Activated CD4-positive, alpha-beta T cell treated with anti-CD3 and anti-CD28 coated beads for 36 hours (primary cell): ENCODE measurements at regions of chr15 and their contacts with region 1.

Region 1: DNA sequence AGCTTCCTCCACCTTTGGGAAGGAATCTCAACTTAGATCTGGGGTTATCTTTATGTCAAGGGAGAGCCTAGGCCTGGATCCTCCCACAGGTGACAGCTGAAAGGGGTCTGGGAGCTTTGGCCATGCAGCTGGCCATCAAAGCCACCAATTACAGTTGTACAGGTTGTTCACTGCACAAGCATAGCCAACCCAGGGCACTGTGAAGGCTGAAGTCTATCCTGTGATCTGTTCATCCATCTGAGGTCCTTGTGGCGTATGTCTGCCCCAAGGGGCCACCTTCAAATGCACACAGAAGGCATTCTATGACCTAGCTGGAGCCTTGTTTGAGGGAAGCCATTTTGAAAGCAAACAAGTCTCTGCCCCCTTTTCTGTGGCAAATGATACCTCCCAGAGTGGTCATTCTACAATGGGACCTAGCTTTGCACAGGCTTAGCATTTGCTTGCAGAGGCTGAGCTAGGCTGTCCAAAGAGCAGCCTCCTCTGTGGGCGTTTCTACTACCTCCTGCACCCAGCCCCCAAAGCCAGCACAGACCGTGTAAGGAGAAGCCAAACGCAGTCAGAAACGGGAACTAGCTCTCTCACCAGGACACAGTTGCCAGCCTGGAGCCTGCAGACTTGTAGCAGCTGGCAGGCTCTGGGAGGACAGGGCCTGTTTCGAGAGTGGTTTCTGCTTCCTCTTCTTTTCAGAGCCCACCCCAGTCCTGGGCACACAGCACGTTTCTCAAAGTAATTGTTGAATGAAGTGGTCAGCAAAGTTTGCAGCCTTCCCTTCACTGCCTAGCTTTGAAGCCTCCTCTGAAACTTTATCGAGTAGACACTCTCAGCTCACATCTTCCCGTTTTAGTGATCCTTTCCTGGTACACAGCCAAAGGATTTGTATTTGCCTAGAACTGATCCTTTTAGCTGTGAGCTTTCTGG is 157.3 kb upstream of the SMAD3 start:
- DNase-seq: no peak
- ATAC-seq: no peak
- H3K4me3 Mint-ChIP-seq: no peak overlapping the region
- H3K27ac Mint-ChIP-seq: no peak overlapping the region
- H3K4me1 Mint-ChIP-seq: peaks cover 18% of the 10 kb centered on the region
- H3K27me3 Mint-ChIP-seq: no peaks in the 10 kb centered on the region

Region 2: DNA sequence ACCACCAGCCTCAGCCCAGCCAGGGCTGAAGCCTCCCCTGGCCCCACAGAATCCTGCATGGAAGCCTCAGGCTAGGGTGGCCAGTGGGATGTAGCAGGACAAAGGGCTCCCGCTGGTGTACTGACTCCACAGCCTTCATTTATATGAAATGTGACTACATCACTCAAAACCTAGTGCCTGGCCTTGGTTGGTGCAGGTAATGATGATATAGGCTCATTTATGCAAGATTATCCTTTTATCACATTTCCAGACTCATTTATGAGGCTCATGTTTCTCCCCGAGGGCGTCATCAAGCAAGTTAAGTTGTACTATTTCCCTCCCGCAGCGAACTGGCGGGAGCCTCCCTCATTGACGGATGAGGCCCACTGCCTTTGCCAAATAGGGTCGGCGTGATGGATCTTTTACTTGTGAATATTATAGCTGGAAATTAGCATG is 21.8 kb before region 1 on chr15:
- CTCF ChIA-PET with region 1: interaction called, 12 read pairs
- POLR2A ChIA-PET with region 1: no interaction called
- intact Hi-C with region 1: no loop called
- DNase-seq: no peak
- ATAC-seq: no peak
- H3K4me3 Mint-ChIP-seq: no peak overlapping the region
- H3K27ac Mint-ChIP-seq: no peak overlapping the region
- H3K4me1 Mint-ChIP-seq: peaks cover 4% of the 10 kb centered on the region
- H3K27me3 Mint-ChIP-seq: peaks cover 2% of the 10 kb centered on the region

Region 3: DNA sequence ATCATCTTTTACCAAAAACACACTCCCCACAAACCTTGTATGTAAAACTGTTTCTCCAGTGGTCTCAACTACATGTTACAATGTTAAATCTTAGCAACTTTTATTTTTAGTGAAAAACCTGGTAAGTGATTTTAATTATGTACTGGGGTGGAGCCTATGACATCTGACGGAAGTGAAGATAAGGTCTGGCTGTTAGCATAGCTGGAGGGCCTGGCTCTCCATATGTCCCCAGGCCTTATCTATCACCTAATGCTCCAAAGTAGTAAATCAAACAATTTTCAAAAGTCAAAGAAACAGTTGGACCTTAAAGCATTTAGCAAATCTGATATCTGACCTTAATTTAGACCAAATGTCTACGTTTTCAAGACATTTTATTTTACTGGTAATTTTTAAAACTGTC is 16.3 kb before region 1 on chr15:
- CTCF ChIA-PET with region 1: interaction called, 12 read pairs
- POLR2A ChIA-PET with region 1: no interaction called
- intact Hi-C with region 1: no loop called
- DNase-seq: no peak
- ATAC-seq: no peak
- H3K4me3 Mint-ChIP-seq: no peak overlapping the region
- H3K27ac Mint-ChIP-seq: no peak overlapping the region
- H3K4me1 Mint-ChIP-seq: no peaks in the 10 kb centered on the region
- H3K27me3 Mint-ChIP-seq: no peaks in the 10 kb centered on the region

Region 4: DNA sequence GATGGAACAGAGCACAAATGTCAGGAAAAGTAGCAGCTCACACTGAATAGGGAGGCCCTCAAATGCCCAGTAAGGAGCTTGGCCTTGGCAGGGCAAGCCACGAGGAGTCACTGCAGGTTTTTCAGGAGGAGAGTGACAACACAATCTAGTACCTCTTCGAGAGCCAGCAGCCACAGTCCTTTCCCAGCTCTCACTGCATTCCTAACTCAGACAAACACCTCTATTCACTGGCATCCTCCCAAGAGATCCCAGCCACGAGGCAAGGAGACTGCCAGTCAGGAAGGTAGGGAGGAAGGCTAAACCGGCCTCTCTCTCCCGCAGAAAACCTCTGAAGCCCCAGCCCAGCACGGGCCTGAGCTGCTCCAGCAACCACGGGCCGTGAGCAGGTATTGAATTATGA is 11.3 kb after region 1 on chr15:
- CTCF ChIA-PET with region 1: interaction called, 15 read pairs
- POLR2A ChIA-PET with region 1: no interaction called
- intact Hi-C with region 1: no loop called
- DNase-seq: no peak
- ATAC-seq: no peak
- H3K4me3 Mint-ChIP-seq: no peak overlapping the region
- H3K27ac Mint-ChIP-seq: no peak overlapping the region
- H3K4me1 Mint-ChIP-seq: peaks cover 4% of the 10 kb centered on the region
- H3K27me3 Mint-ChIP-seq: peaks cover 14% of the 10 kb centered on the region